Gastrocnemius medialis (tissue), 4 donors: ENCODE measurements at regions of chr6 and their contacts with region 1.

Region 1: GRCh38 chr6:15358579-15359327 is 112.9 kb downstream of the JARID2 start:
- DNase-seq: no peak
- ATAC-seq: no peak
- H3K4me3 ChIP-seq: no peak overlapping the region
- H3K27ac ChIP-seq: peak overlapping the region; percentile 72 to 79 (median 75)
- H3K4me1 ChIP-seq: peaks cover 74 to 79% of the 10 kb centered on the region in 2 donors
- H3K27me3 ChIP-seq: no peaks in the 10 kb centered on the region
- CTCF ChIP-seq: no peak
- POLR2A ChIP-seq: no peak

Region 2: GRCh38 chr6:14936861-14937260 is 421.9 kb before region 1 on chr6:
- in situ Hi-C with region 1: no loop called
- intact Hi-C with region 1: no loop called
- DNase-seq: no peak
- ATAC-seq: no peak
- H3K4me3 ChIP-seq: no peak overlapping the region
- H3K27ac ChIP-seq: no peak overlapping the region
- H3K4me1 ChIP-seq: no peaks in the 10 kb centered on the region
- H3K27me3 ChIP-seq: no peaks in the 10 kb centered on the region
- CTCF ChIP-seq: no peak
- POLR2A ChIP-seq: no peak

Region 3: DNA sequence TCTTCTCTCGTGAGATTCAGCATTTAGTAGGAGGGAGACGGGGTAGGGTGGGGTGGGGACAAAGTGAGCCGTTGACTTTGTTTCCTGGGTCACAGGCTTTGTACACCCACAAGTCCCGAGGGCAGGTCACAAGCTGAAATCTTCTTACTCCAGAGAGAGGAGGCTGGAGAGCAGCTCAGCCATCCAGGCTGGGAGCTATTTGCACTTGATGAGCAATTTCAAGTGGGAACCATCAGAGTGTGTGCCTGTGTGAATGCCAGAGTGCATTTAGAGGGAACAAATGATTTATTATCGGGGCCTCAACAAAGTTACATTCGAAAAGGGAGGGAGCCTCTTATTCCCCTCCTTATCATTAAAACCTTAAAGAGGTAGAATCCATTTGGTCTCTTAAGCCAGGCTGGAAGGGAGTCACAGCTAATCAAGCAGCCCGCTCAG is 268.6 kb before region 1 on chr6:
- in situ Hi-C with region 1: no loop called
- intact Hi-C with region 1: no loop called
- DNase-seq: peak in 1 of 2 donors; percentile 8
- ATAC-seq: peak; percentile 58 to 81
- H3K4me3 ChIP-seq: no peak overlapping the region
- H3K27ac ChIP-seq: no peak overlapping the region
- H3K4me1 ChIP-seq: no peaks in the 10 kb centered on the region
- H3K27me3 ChIP-seq: no peaks in the 10 kb centered on the region
- CTCF ChIP-seq: no peak
- POLR2A ChIP-seq: no peak

Region 4: DNA sequence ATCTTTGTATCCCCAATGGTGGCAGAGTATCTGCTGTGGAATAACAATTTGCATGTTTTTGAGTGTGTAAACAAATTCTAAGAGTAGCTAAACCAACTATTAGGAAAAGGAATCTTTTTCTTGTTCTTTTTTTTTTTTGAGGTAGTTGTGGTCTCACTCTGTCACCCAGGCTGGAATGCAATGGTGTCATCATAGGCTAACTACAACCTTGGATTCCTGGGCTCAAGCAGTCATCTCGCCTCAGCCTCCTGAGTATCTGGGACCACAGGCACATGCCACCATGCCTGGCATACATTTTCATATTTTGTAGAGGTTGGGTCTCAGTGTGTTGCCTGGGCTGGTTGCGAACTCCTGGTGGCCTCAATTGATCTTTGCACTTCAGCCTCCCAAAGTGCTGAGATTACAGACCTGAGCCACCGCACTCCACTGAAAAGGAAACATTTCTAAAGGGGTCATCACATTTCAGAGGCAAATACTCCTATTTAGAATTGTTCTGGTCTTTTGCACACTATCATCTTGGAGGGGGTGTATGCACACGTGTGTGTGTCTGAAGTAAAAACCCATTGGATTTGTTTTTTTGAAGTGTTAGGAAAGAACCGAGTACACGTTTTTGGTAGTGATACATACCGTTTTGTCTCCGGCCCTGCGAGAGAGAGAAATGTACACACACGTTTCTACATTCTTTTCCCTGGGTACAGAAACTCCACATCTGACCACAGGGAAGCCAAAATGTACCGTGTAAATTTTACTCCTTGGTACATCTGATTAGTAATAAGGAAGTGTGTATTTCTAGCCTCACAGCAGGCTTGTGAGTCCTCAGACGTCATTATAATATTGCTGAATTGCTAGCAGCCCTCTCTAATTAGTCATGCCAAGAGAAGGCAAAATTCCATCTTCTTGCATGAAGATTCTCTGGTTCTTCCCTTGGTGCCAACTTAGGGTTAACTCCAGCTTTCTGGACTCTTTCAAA is 70.7 kb after region 1 on chr6:
- in situ Hi-C with region 1: no loop called
- intact Hi-C with region 1: loop called (anchors 5 kb)
- DNase-seq: no peak
- ATAC-seq: peak in 1 of 2 donors; percentile 11
- H3K4me3 ChIP-seq: no peak overlapping the region
- H3K27ac ChIP-seq: peak overlapping the region; percentile 83 to 90 (median 90)
- H3K4me1 ChIP-seq: peaks cover 69 to 77% of the 10 kb centered on the region in 2 donors
- H3K27me3 ChIP-seq: no peaks in the 10 kb centered on the region
- CTCF ChIP-seq: no peak
- POLR2A ChIP-seq: no peak